ENCODE measurements at regions of chr12 and their contacts with region 1.

Region 1: DNA sequence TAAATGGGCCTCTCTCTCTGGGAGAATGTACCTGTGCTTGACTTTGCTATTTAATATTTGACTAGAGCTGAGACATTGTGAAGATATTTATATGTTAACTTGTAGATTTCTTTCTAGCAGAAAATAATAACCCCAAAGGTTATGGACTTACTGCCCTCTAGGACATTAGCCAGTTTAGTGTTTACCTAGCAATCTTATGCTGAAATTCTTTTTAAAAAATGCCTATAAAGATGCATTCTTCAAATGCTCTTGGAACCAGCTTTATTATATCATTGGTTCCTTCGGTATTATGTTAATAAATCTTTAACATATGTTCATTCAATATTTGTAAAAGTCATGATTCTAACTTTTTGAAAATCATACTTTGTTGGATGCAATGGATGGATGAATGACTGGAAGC is 28.0 kb downstream of the GPR19 start:
- DNase-seq: no peak
- H3K27ac ChIP-seq: no peak overlapping the region
- CTCF ChIP-seq: no peak

Region 2: DNA sequence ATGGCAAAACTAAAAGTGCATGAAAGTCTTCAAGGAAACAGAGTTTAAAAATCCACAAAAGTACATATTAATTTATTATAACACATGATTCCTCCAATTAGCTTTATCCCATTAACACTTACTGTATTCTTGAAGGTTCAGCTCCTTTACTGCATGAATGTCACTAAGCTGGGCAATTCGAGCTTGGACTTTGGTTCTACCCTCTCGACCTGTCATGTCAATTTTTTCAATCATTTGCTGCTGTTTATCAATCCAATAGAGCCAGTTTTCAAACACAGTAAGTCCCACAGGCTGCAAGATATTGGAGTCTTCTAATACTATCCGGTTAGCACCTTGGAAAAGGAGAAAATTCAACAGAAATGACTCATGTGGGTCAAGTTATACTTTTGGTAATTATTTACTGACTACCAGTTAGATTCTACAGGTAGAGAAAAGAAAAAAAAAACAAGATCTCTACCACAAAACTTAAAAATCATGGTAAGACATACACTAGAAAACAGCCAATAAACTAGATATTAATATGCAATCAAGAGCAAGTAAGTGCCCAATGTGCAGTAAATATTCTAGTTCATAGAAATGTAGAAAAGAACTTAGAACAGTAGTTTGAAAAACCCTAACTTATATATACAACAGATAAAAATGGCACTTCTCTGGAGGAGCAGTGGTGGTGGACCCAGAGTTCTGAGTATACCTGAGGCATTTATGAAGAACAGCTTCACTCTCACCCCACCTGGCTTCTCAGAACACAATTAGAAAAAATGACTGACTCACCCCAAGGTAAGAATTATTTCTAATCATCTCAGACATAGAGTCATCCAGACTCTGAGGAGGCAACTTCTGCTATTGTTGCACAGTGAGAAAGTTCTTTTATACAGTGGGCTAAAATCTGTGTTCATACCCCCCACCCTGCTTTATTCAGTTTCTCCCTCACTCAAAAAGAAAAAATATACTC is 529.5 kb before region 1 on chr12:
- CTCF ChIA-PET with region 1: interaction called, 10 read pairs
- POLR2A ChIA-PET with region 1: no interaction called
- DNase-seq: no peak
- H3K27ac ChIP-seq: no peak overlapping the region
- CTCF ChIP-seq: no peak